PC-9 (cell line): ENCODE measurements at regions of chr16 and their contacts with region 1.

Region 1: DNA sequence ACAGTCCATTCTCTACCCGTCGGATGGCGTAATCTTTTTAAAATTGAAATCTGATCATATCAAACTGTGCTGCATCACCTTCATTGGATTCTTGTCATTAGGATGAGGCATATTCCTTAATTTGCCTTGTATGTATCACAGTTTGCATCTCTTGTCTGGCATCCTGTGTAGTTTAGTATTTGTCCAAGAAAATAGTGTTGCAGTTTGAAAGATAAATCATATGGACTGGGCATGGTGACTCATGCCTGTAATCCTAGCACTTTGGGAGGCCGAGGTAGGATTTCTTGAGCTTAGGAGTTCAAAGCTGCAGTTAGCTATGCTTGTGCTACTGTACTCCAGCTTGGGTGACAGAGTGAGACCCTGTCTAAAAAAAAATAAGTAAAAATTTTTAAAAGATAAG is 5.8 kb upstream of the RSL1D1 start:
- DNase-seq: no peak
- H3K4me3 ChIP-seq: no peak overlapping the region
- H3K27ac ChIP-seq: no peak overlapping the region
- H3K4me1 ChIP-seq: peaks cover 8% of the 10 kb centered on the region; the same call in 1 of the 2 replicates
- H3K27me3 ChIP-seq: no peaks in the 10 kb centered on the region
- CTCF ChIP-seq: no peak

Region 2: GRCh38 chr16:11291091-11291703 is 566.0 kb before region 1 on chr16:
- CTCF ChIA-PET with region 1: no interaction called
- POLR2A ChIA-PET with region 1: no interaction called
- intact Hi-C with region 1: no loop called
- DNase-seq: no peak
- H3K4me3 ChIP-seq: no peak overlapping the region
- H3K27ac ChIP-seq: no peak overlapping the region
- H3K4me1 ChIP-seq: no peaks in the 10 kb centered on the region
- H3K27me3 ChIP-seq: no peaks in the 10 kb centered on the region
- CTCF ChIP-seq: no peak

Region 3: DNA sequence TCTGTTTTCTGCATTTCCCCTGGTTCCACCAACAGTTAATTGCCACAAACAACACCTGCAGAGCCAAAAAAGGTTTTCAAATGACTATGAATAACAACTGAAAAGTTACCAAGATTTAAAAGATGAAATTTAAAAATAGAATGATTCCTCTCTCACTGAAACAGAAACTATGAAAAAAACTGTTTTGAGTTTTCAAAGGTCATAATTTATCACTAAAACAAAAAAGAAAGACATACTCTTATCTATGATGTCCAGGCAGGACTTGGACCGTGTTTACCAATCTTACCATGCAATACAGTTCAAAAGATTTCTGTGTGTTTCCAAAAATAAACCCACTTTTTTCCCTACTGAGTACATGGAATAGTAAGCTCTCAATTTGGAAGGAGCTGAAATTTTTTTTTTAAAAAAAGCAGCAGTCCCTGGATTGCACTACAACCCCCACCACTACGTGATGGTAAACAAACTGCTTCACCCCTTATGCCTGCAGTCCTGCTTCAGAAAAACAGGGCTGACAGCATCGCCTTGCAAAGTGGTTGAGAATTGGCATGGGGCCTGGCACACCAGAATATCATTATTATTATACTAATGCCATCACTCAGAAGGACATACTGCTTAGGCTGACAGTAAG is 123.0 kb before region 1 on chr16:
- CTCF ChIA-PET with region 1: no interaction called
- POLR2A ChIA-PET with region 1: no interaction called
- intact Hi-C with region 1: no loop called
- DNase-seq: no peak
- H3K4me3 ChIP-seq: no peak overlapping the region
- H3K27ac ChIP-seq: no peak overlapping the region
- H3K4me1 ChIP-seq: no peaks in the 10 kb centered on the region
- H3K27me3 ChIP-seq: no peaks in the 10 kb centered on the region
- CTCF ChIP-seq: no peak

Region 4: DNA sequence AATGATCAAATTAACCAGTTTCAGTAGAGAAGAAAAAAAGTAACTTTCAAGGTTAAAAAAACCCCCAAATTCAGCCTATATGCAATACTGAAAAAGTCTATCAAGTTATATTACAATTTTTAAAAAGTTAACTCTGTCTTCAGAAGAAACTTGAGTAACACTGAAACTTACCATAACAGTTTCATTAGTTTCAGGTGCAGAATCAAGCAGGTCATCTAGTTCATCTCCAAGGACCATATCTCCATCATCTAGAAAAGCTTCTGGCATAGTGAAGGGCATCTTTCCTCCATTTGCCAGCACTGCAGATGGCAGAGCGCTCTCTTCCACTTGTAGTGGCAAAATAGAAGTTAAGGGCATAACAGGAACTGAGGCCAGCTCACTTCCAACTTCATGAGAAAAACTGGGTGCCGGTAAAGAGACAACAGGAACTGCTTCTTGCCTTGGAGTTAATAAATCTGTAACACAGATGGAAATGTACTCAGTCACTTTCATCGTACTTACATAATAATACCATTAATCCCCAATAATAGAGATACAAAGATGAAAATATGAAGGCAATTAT is 83.0 kb before region 1 on chr16:
- CTCF ChIA-PET with region 1: interaction called, 12 read pairs
- POLR2A ChIA-PET with region 1: no interaction called
- intact Hi-C with region 1: no loop called
- DNase-seq: no peak
- H3K4me3 ChIP-seq: no peak overlapping the region
- H3K27ac ChIP-seq: no peak overlapping the region
- H3K4me1 ChIP-seq: no peaks in the 10 kb centered on the region
- H3K27me3 ChIP-seq: no peaks in the 10 kb centered on the region
- CTCF ChIP-seq: no peak

Region 5: DNA sequence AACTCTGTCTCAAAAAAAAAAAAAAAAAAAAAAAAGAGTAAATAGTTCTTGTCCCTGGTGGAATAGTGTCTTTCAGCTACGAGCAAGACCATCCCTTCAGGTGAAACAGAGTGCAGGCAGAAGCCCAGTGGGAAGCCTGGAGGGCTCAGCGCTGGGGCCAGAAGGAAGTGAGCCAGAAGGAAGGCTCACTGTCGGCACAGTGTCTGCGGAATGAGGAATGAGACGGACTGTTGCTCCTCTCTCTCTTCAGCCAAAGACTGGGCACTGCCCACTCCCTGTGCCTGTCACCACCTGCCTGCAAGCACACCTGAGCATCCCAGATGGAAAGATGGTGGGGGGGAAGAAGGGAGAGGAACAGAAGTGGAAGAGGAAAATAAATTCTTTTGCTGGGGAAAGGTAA is 13.3 kb before region 1 on chr16:
- CTCF ChIA-PET with region 1: no interaction called
- POLR2A ChIA-PET with region 1: interaction called, 10 read pairs
- intact Hi-C with region 1: no loop called
- DNase-seq: no peak
- H3K4me3 ChIP-seq: no peak overlapping the region
- H3K27ac ChIP-seq: no peak overlapping the region
- H3K4me1 ChIP-seq: peaks cover 2% of the 10 kb centered on the region
- H3K27me3 ChIP-seq: no peaks in the 10 kb centered on the region
- CTCF ChIP-seq: no peak